ENCODE measurements at regions of chr11 and their contacts with region 1.

Region 1: DNA sequence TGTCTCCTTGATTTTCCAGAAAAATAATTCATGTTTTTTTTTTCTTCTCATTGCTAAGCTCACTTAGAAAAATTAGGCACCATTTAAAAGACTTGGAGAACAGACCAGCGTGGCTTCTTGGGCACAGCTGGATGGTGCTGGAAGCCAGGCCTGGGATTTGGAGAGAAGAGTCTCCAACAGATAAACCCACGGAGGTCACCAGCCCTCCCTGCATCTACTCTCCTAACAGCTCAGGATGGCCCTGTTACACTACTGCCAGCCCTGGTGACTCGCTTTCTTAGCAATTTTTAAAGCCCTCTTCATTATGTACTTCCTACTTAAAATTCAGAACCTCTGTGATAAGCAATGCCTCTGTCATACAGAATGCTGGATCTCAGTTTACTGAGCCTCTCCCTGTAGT is 1.7 kb downstream of the PTH start:
- DNase-seq: no peak
- H3K4me3 Mint-ChIP-seq: no peak overlapping the region
- H3K27ac Mint-ChIP-seq: no peak overlapping the region
- H3K4me1 Mint-ChIP-seq: no peaks in the 10 kb centered on the region
- H3K27me3 Mint-ChIP-seq: peaks cover 29% of the 10 kb centered on the region
- CTCF ChIP-seq: no peak

Region 2: GRCh38 chr11:13680501-13681264 is 186.6 kb after region 1 on chr11:
- CTCF ChIA-PET with region 1: no interaction called
- intact Hi-C with region 1: loop called (anchors 10 kb)
- DNase-seq: no peak
- H3K4me3 Mint-ChIP-seq: no peak overlapping the region
- H3K27ac Mint-ChIP-seq: no peak overlapping the region
- H3K4me1 Mint-ChIP-seq: peaks cover 33% of the 10 kb centered on the region
- H3K27me3 Mint-ChIP-seq: no peaks in the 10 kb centered on the region
- CTCF ChIP-seq: no peak

Measured in Calu3 (cell line).